PC-3 (cell line): ENCODE measurements at regions of chr14 and their contacts with region 1.

Region 1: GRCh38 chr14:73568381-73568781 is 632 bp upstream of the ACOT2 start:
- DNase-seq: peak; percentile 62
- ATAC-seq: peak; percentile 12; the same call in 1 of the 2 replicates
- H3K4me3 ChIP-seq: peak overlapping the region; percentile 67
- H3K27ac ChIP-seq: no peak overlapping the region
- H3K4me1 ChIP-seq: peaks cover 31% of the 10 kb centered on the region
- H3K27me3 ChIP-seq: no peaks in the 10 kb centered on the region
- CTCF ChIP-seq: no peak

Region 2: DNA sequence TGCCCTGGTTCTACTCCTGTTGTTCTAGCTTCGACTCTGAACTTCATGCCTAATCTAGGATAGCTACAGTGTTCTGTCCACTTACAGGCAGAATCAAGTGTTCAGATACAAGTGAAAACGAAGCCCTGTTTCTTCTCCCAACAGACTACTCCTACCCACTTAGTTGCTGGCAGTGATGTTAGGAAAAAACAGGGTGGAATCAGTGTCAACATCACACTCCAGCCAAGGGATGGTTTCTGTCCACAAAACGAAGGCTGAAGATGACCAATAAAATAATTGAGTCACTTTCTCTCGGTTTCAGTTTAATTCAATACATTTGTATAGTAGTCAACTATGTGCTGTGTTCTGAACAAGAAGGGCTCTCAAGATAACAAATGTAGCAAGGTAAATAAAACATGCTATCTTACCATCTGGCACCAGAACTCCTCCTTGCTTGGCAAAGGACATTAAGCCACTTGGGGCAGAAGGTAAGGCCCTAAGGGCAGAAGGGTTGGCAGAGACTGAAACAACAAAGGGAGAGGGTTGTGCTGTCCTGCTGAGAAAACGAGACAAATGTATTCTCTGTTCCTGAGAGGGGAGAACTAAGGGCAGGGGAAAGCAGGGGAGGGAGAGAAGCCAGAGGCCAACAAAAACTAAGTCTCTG is 1068.1 kb before region 1 on chr14:
- CTCF ChIA-PET with region 1: no interaction called
- POLR2A ChIA-PET with region 1: no interaction called
- intact Hi-C with region 1: loop called (anchors 1 kb)
- DNase-seq: peak; percentile 61
- ATAC-seq: peak; percentile 85
- H3K4me3 ChIP-seq: no peak overlapping the region
- H3K27ac ChIP-seq: 0 out of 2 replicates have a peak overlapping the region, but pooled peaks have one; percentile 2
- H3K4me1 ChIP-seq: peaks cover 21% of the 10 kb centered on the region; the same call in 1 of the 2 replicates
- H3K27me3 ChIP-seq: peaks cover 22% of the 10 kb centered on the region
- CTCF ChIP-seq: no peak

Region 3: GRCh38 chr14:73227812-73228781 is 340.3 kb before region 1 on chr14:
- CTCF ChIA-PET with region 1: no interaction called
- POLR2A ChIA-PET with region 1: no interaction called
- intact Hi-C with region 1: loop called (anchors 10 kb)
- DNase-seq: peak; percentile 97
- ATAC-seq: peak; percentile 88
- H3K4me3 ChIP-seq: peak overlapping the region; percentile 40; the same call in 1 of the 2 replicates
- H3K27ac ChIP-seq: peak overlapping the region; percentile 88
- H3K4me1 ChIP-seq: peaks cover 23% of the 10 kb centered on the region
- H3K27me3 ChIP-seq: no peaks in the 10 kb centered on the region
- CTCF ChIP-seq: no peak

Region 4: GRCh38 chr14:73491256-73492042 is 76.9 kb before region 1 on chr14:
- CTCF ChIA-PET with region 1: interaction called, 3 read pairs
- POLR2A ChIA-PET with region 1: interaction called, 13 read pairs
- intact Hi-C with region 1: loop called (anchors 2 kb)
- DNase-seq: peak; percentile 74
- ATAC-seq: peak; percentile 81
- H3K4me3 ChIP-seq: peak overlapping the region; percentile 79
- H3K27ac ChIP-seq: peak overlapping the region; percentile 27; the same call in 1 of the 2 replicates
- H3K4me1 ChIP-seq: peaks cover 26% of the 10 kb centered on the region
- H3K27me3 ChIP-seq: no peaks in the 10 kb centered on the region
- CTCF ChIP-seq: no peak

Region 5: GRCh38 chr14:73526569-73526968 is 41.8 kb before region 1 on chr14:
- CTCF ChIA-PET with region 1: interaction called, 5 read pairs
- POLR2A ChIA-PET with region 1: interaction called, 13 read pairs
- intact Hi-C with region 1: no loop called
- DNase-seq: peak; percentile 97
- ATAC-seq: peak; percentile 96
- H3K4me3 ChIP-seq: no peak overlapping the region
- H3K27ac ChIP-seq: peak overlapping the region; percentile 58
- H3K4me1 ChIP-seq: peaks cover 24% of the 10 kb centered on the region
- H3K27me3 ChIP-seq: no peaks in the 10 kb centered on the region
- CTCF ChIP-seq: peak; percentile 18; the same call in 1 of the 2 replicates